AG04449 (cell line): ENCODE measurements at regions of chr2 and their contacts with region 1.

Region 1: GRCh38 chr2:26964446-26965130 is 5.8 kb upstream of the MAPRE3 start:
- DNase-seq: no peak
- H3K4me3 ChIP-seq: no peak overlapping the region
- CTCF ChIP-seq: no peak

Region 2: GRCh38 chr2:26735096-26735495 is 229.5 kb before region 1 on chr2:
- CTCF ChIA-PET with region 1: no interaction called
- POLR2A ChIA-PET with region 1: no interaction called
- DNase-seq: peak; percentile 54
- H3K4me3 ChIP-seq: no peak overlapping the region
- CTCF ChIP-seq: no peak

Region 3: DNA sequence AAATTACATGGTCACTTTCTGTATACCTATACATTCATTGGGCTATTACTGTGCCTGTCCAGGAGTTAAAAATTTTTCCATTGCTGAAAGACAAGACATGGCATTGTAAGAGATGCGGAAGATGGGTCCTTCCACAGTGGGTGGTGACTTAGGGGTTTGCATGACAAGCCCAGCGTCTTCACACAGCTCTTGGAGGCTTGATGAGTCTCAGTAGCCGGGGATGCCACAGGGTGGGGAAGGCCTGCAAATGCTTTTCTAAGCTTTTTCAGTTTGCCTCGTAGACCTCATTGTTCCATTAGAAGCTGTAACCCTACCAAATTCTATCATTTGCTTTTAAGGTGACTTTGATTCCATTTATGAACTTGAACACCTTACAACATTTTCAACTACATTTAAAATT is 12.2 kb before region 1 on chr2:
- CTCF ChIA-PET with region 1: interaction called, 48 read pairs
- POLR2A ChIA-PET with region 1: no interaction called
- DNase-seq: no peak
- H3K4me3 ChIP-seq: no peak overlapping the region
- CTCF ChIP-seq: no peak

Region 4: GRCh38 chr2:26976237-26976636 is 11.6 kb after region 1 on chr2:
- CTCF ChIA-PET with region 1: interaction called, 27 read pairs
- POLR2A ChIA-PET with region 1: no interaction called
- DNase-seq: no peak
- H3K4me3 ChIP-seq: no peak overlapping the region
- CTCF ChIP-seq: no peak

Region 5: GRCh38 chr2:27024188-27024587 is 59.6 kb after region 1 on chr2:
- CTCF ChIA-PET with region 1: interaction called, 663 read pairs
- POLR2A ChIA-PET with region 1: no interaction called
- DNase-seq: no peak
- H3K4me3 ChIP-seq: no peak overlapping the region
- CTCF ChIP-seq: peak; percentile 15

Region 6: DNA sequence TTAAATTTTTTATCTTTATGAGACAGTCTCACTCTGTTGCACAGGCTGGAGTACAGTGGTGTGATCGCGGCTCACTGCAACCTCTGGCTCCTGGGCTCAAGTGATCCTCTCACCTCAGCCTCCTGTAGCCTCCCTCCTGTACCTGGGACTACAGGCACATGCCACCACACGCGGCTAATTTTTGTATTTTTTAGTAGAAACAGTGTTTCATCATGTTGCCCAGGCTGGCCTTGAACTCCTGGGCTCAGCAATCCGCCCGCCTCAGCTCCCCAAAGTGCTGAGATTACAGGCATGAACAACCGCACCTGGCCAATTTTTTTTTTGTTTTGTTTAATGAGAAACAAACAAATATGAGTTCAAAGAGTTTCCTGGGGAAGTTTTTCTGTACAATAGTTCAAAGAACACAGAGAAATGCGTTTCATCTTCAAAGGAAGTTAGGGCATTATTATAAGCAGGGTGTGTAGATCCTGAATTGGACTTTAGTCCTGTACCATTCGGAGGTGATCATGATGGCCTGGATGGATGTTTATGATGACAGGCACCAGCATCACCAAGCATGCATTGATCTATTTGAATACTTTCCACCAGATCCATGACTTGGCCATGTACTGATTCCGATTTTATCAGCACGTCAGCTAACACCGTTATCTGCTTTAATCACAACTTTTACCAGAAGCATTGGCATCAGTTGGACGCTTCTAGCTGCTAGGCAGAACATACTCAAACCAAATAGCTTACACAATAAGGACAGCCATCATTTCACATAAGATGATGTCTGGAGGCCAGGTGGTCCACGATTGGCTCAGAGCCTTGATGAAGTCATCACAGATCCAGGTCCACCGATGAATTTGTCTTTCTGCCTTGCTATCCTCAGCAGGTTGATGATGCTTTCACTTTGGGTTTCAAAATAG is 213.1 kb after region 1 on chr2:
- CTCF ChIA-PET with region 1: no interaction called
- POLR2A ChIA-PET with region 1: no interaction called
- DNase-seq: no peak
- H3K4me3 ChIP-seq: no peak overlapping the region
- CTCF ChIP-seq: no peak